Left colon (tissue), 2 donors: ENCODE measurements at regions of chr18 and their contacts with region 1.

Region 1: GRCh38 chr18:22710628-22711380 is 222.3 kb upstream of the RBBP8 start:
- DNase-seq: peak; percentile 48 to 51
- ATAC-seq: peak; percentile 84

Region 2: DNA sequence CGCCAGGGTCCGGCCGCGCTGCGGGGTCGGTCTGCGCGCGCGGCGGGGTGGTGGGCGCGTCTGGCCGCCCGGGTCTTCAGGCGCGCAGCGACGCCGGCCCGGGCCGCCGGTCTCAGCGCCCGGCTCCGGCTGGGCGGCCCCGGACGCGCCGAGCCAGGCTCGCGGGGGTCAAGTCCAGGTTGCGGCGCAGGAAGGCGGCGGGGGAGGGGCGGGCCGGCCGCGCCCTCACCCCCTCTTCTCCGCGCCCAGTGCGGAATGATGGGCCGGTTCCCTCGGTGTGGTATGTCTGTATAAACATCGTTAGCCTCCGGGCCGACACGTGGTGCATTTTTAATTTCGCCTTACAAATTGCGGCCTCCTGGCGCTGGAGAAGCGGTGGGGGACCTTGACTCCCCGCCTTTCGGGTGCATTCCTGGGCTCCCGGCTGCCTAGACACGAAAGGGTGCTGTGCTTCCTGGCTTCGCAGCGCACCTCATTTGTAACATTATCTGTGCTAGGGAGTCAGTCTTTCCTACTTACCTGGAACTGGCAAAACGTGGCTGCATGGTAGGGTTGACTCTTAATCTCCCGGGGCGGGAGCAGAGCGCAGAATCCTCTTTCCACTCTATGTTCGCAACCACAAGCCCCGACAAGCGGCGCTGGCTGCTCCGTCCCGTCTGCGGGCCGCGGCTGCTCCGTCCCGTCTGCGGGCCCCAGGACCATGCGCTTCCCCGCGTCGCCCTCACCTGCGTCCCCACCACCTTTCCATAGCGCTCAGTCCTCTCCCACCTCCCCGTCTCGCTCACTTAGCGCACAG is 362.1 kb before region 1 on chr18:
- intact Hi-C with region 1: loop called in 1 of 2 experiments (anchors 10 kb)
- DNase-seq: peak; percentile 69 to 75
- ATAC-seq: peak; percentile 68